ENCODE measurements at regions of chr13 and their contacts with region 1.

Region 1: GRCh38 chr13:99442273-99442895 is 58.9 kb upstream of the TM9SF2 start:
- DNase-seq: no peak
- H3K4me3 ChIP-seq: no peak overlapping the region
- H3K27ac ChIP-seq: no peak overlapping the region
- H3K4me1 ChIP-seq: no peaks in the 10 kb centered on the region
- H3K27me3 ChIP-seq: no peaks in the 10 kb centered on the region
- CTCF ChIP-seq: peak; percentile 62 to 93 (median 81)
- POLR2A ChIP-seq: no peak

Region 2: GRCh38 chr13:99501184-99501847 is 58.9 kb after region 1 on chr13 and contains the start of gene TM9SF2:
- intact Hi-C with region 1: loop called (anchors 10 kb)
- DNase-seq: peak in 1 of 2 donors; percentile 96
- H3K4me3 ChIP-seq: peak within 1 kb of the TSS; percentile 83 to 86
- H3K27ac ChIP-seq: peak within 1 kb of the TSS; percentile 72
- H3K4me1 ChIP-seq: peaks cover 68% of the 10 kb centered on the region
- H3K27me3 ChIP-seq: no peaks in the 10 kb centered on the region
- CTCF ChIP-seq: peak in 1 of 3 experiments; percentile 7
- POLR2A ChIP-seq: peak in 1 of 2 donors; percentile 67
- total RNA-seq, gene TM9SF2: 59.2 TPM